ENCODE measurements at regions of chr6 and their contacts with region 1.

Region 1: GRCh38 chr6:104859225-104860146 is at the start of gene HACE1:
- DNase-seq: no peak
- H3K4me3 ChIP-seq: peak within 1 kb of the TSS; percentile 76 to 84
- H3K27ac ChIP-seq: peak within 1 kb of the TSS; percentile 79
- H3K4me1 ChIP-seq: peaks cover 12% of the 10 kb centered on the region
- H3K27me3 ChIP-seq: no peaks in the 10 kb centered on the region
- CTCF ChIP-seq: peak in 1 of 3 experiments; percentile 16
- POLR2A ChIP-seq: no peak
- total RNA-seq, gene HACE1: 27.7 TPM

Region 2: DNA sequence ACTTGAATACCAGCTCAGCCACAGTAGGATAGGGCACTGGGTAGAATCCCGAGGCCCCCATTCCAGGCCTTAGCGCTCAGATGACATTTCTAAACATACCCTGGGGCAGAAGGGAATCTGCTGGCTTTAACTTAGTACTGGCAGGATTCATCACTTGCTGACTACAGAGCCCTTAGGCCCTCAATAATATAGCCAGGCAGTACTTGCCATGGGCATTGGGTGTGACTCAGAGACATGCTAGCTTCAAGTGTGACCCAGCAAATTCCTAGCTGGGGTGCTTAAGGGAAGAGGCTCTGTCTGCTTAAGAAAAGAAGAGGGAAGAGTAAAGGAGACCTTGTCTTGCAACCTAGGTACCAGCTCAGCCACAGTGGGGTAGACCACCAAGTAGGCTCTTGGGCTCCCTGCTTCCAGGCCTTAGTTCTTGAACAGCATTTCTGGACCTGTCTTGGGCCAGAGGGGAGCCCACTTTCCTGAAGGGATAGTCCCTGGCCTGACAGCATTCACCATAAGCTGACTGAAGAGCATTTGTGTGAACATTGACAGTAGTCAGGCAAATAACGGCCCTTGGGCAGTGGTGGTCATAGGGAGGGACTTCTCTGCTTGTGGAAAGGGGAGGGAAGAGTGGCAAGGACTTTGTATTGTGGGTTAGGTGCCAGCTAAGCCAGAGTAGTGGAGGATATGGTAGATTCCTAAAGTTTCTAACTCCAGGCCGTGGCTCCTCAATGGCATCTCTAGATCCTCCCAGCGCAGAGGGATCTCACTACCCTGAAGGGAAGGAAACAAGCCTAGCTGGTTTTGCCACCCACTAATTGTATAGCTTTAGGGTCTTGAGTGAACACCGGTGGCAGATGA is 48.8 kb after region 1 on chr6:
- intact Hi-C with region 1: no loop called
- DNase-seq: no peak
- H3K4me3 ChIP-seq: no peak overlapping the region
- H3K27ac ChIP-seq: no peak overlapping the region
- H3K4me1 ChIP-seq: no peaks in the 10 kb centered on the region
- H3K27me3 ChIP-seq: no peaks in the 10 kb centered on the region
- CTCF ChIP-seq: no peak
- POLR2A ChIP-seq: no peak

Region 3: DNA sequence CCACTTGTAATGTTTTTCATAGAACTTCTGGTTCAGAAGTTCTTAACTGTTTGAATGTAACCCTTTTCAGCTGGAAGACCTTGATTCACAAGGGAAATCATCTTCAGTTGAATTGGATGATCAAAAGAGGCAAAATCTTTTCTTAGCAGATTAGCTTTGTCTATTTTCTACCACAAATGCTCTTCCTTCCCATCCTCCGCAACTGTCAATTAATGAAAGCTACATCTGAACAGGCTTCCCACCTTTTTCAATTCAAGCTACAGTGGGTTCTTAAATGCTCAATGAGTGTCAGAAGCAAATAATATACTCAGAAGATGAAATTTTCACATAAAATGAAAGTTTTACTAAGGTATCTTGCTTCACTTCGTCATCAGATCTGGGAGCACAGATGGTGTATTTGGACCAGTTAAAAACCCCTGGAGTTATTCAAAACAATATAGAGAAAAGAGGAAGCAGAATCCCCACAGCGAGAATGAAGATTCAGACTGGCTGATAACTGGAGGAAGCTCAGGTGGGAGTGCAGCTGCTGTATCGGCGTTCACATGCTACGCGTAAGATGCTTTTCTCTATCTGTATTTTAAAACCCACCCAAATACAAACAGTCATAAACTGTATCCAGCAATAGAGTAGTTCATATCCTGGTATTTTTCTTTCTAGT is 1789.3 kb after region 1 on chr6:
- intact Hi-C with region 1: loop called (anchors 10 kb)
- DNase-seq: no peak
- H3K4me3 ChIP-seq: no peak overlapping the region
- H3K27ac ChIP-seq: no peak overlapping the region
- H3K4me1 ChIP-seq: no peaks in the 10 kb centered on the region
- H3K27me3 ChIP-seq: no peaks in the 10 kb centered on the region
- CTCF ChIP-seq: no peak
- POLR2A ChIP-seq: no peak

Measured in vagina (tissue), 2 donors.